Prostate gland (tissue), 2 donors: ENCODE measurements at regions of chr16 and their contacts with region 1.

Region 1: GRCh38 chr16:47037746-47038458 is 64.4 kb upstream of the DNAJA2 start:
- DNase-seq: peak; percentile 82
- H3K4me3 ChIP-seq: peak overlapping the region; percentile 48 to 54
- H3K27ac ChIP-seq: peak overlapping the region in 1 of 2 donors; percentile 62
- H3K4me1 ChIP-seq: no peaks in the 10 kb centered on the region
- H3K27me3 ChIP-seq: no peaks in the 10 kb centered on the region
- CTCF ChIP-seq: peak; percentile 73 to 93 (median 86)
- POLR2A ChIP-seq: no peak

Region 2: GRCh38 chr16:47018223-47018891 is 19.5 kb before region 1 on chr16:
- intact Hi-C with region 1: no loop called
- DNase-seq: peak; percentile 55
- H3K4me3 ChIP-seq: no peak overlapping the region
- H3K27ac ChIP-seq: no peak overlapping the region
- H3K4me1 ChIP-seq: no peaks in the 10 kb centered on the region
- H3K27me3 ChIP-seq: no peaks in the 10 kb centered on the region
- CTCF ChIP-seq: peak in 3 of 4 experiments; percentile 41 to 60 (median 50)
- POLR2A ChIP-seq: no peak

Region 3: GRCh38 chr16:48164907-48165726 is 1127.2 kb after region 1 on chr16:
- intact Hi-C with region 1: loop called (anchors 5 kb)
- DNase-seq: peak; percentile 55
- H3K4me3 ChIP-seq: no peak overlapping the region
- H3K27ac ChIP-seq: peak overlapping the region; percentile 52 to 59
- H3K4me1 ChIP-seq: no peaks in the 10 kb centered on the region
- H3K27me3 ChIP-seq: no peaks in the 10 kb centered on the region
- CTCF ChIP-seq: peak; percentile 54 to 85 (median 76)
- POLR2A ChIP-seq: no peak